Dorsolateral prefrontal cortex (tissue), 120 donors: ENCODE measurements at regions of chr19 and their contacts with region 1.

Region 1: DNA sequence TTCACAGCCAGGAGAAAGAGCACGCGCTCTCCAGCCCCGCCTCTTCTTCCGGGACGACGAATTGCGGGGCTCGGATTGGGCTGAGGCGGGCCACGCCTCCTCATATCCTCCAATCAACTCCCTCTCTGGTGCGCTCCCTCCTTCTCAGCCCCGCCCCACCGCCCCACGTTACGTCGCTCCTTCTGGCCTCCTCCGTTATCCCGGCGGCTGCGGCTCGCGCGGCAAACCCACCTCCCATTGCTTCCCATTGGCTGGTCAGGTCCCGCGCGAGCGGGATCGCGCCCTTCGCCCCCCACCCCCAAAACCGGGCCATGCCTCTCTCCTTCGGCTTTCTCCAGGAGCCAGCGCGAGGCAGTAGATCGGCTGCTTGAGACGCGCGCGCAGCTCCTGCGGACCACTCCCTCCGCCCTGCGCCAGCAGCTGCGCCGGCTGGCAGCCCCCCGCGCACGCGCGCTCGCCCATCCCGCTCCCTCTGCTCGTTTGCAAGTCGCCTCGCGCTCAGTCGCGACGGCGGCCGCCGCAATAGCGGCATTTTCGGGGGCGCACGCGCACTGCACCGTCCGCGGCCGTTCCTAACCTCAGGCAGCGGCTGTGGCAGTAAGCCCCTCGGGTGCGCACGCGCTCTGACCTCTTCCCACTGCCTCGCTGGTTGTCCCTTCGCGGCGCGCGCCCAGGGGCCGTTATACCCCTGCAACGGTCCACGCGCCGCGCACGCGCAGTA is 512 bp upstream of the ARHGAP35 start:
- DNase-seq: peak; percentile 93 to 99 (median 97)
- H3K4me3 ChIP-seq: peak overlapping the region; percentile 68 to 93 (median 84)
- H3K27ac ChIP-seq: peak overlapping the region; percentile 91 to 100 (median 99)
- H3K27me3 ChIP-seq: no peaks in the 10 kb centered on the region
- CTCF ChIP-seq: peak in 16 of 56 donors; percentile 7 to 51 (median 21)

Region 2: DNA sequence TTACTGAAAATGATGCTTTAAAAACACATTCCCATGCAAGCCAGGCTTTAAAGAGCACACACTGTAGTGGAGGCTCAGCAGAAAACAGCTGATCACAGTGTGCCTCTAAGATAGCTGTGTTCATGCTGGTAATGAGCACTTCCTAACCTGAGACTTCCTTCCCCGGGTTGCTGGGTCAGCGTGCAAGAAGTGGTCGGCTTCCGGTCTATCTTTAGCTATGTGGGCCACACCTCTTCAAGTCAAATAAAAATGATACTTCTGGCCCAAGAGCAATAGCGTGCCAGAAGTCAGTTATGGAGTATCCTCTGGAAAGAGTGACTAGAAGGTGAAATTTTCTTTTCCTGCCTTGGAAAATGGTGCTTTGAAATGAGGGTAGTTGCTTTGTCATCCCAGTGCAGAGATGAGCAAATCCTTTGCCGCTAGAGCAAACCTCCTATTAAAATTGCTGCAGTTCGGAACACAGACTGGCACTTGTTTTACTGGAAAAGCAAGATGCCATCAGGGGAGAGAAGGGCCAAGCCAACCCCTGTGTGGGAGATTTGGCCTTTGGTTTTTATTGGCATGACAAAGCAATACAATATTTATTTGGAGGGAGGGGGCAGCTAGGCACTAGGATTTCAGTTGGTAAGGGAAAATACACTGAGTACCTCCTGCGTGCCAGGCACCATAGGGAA is 64.7 kb after region 1 on chr19:
- intact Hi-C with region 1: loop called (anchors 1 to 2 kb)
- DNase-seq: no peak
- H3K4me3 ChIP-seq: peak overlapping the region in 40 of 59 donors; percentile 1 to 58 (median 34)
- H3K27ac ChIP-seq: peak overlapping the region; percentile 58 to 98 (median 93)
- H3K27me3 ChIP-seq: no peaks in the 10 kb centered on the region
- CTCF ChIP-seq: no peak

Region 3: DNA sequence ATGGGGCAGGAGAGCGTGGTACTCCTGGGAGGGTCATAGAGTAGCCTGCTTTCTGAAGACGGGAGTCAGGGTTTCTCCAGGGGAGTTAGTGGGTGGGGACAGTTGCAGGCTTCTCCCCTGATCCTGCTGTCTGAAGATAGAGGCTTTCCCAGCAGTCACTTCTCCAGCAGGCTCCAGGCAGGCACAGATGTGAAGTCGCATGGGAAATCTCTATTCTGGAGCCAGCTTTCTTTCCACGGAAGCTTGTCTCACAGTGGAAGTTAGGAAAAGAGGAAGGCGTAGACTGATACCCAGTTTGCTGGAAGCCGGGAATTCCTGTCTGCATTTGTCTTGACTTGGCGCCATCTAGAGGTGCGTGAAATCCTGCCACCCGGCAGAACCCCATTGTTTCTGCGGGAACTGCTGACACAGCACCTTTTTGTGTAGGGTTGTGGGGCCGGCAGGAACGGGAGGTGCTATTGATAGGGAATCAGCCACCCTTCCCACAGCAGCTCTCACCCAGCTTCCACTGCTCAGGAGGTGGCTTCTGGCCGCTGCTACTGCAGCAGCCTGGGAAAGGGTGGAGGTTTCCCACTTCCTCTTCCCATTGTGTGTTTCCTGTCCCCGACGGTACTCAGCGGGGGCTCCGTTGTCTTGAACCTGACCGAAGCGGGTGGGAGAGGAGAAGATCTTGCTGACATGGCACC is 130.8 kb after region 1 on chr19:
- intact Hi-C with region 1: loop called (anchors 1 to 2 kb)
- DNase-seq: peak; percentile 71 to 90 (median 86)
- H3K4me3 ChIP-seq: peak overlapping the region in 12 of 59 donors; percentile 3 to 28 (median 16)
- H3K27ac ChIP-seq: peak overlapping the region in 58 of 59 donors; percentile 25 to 87 (median 75)
- H3K27me3 ChIP-seq: no peaks in the 10 kb centered on the region
- CTCF ChIP-seq: peak; percentile 84 to 97 (median 91)

Region 4: GRCh38 chr19:47112997-47113849 is 252.9 kb after region 1 on chr19 and contains the start of gene ZC3H4:
- intact Hi-C with region 1: loop called (anchors 5 to 10 kb)
- DNase-seq: peak; percentile 95 to 99 (median 98)
- H3K4me3 ChIP-seq: peak within 1 kb of the TSS; percentile 62 to 99 (median 92)
- H3K27ac ChIP-seq: peak within 1 kb of the TSS; percentile 98 to 100 (median 100)
- H3K27me3 ChIP-seq: no peaks in the 10 kb centered on the region
- CTCF ChIP-seq: peak in 6 of 56 donors; percentile 11 to 25 (median 14)
- total RNA-seq, gene ZC3H4: 28.4 to 56.1 (median 40.3) TPM